ENCODE measurements at regions of chr11 and their contacts with region 1.

Region 1: DNA sequence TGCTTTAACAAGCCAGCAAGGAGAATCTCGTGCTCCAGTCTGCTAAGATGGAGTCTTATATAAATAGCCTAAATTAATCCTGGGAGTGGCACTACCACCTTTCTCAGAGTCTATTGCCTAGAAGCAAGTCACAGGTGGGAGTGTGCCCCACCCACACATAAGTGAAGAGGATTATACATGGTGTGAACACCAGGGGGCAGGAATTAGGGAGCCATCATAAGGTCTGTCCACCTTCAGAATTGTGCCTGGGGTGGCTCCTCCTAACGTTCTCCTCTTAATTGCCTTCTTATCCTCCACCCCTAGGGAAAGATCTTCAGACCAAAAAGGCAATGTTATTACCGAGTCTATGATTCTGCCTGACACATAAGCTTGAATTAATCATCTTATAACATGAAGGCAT is 276.8 kb upstream of the SESN3 start:
- DNase-seq: no peak
- H3K4me3 ChIP-seq: no peak overlapping the region
- H3K27ac ChIP-seq: no peak overlapping the region
- H3K4me1 ChIP-seq: no peaks in the 10 kb centered on the region
- H3K27me3 ChIP-seq: peaks cover 0 to 1% (median 0%) of the 10 kb centered on the region in 4 experiments; a peak in 1 of 7 replicates
- CTCF ChIP-seq: peak in 2 of 3 experiments; percentile 6 to 21; a peak in 2 of 4 replicates
- EP300 ChIP-seq: no peak
- POLR2A ChIP-seq: no peak
- RAD21 ChIP-seq: peak in 1 of 2 experiments; percentile 10; a peak in 1 of 4 replicates

Region 2: GRCh38 chr11:95524314-95525036 is 16.7 kb after region 1 on chr11:
- CTCF ChIA-PET with region 1: interaction called, 11 read pairs
- POLR2A ChIA-PET with region 1: no interaction called
- DNase-seq: no peak
- H3K4me3 ChIP-seq: no peak overlapping the region
- H3K27ac ChIP-seq: no peak overlapping the region
- H3K4me1 ChIP-seq: no peaks in the 10 kb centered on the region
- H3K27me3 ChIP-seq: no peaks in the 10 kb centered on the region
- CTCF ChIP-seq: no peak
- EP300 ChIP-seq: no peak
- POLR2A ChIP-seq: no peak
- RAD21 ChIP-seq: no peak

Region 3: GRCh38 chr11:95534809-95535208 is 27.0 kb after region 1 on chr11:
- CTCF ChIA-PET with region 1: no interaction called
- POLR2A ChIA-PET with region 1: no interaction called
- DNase-seq: no peak
- H3K4me3 ChIP-seq: no peak overlapping the region
- H3K27ac ChIP-seq: no peak overlapping the region
- H3K4me1 ChIP-seq: no peaks in the 10 kb centered on the region
- H3K27me3 ChIP-seq: no peaks in the 10 kb centered on the region
- CTCF ChIP-seq: no peak
- EP300 ChIP-seq: no peak
- POLR2A ChIP-seq: no peak
- RAD21 ChIP-seq: no peak

Measured in H1 (cell line).